RWPE1 (cell line): ENCODE measurements at regions of chrX and their contacts with region 1.

Region 1: GRCh38 chrX:74015379-74016019 is 288.5 kb upstream of the ZCCHC13 start:
- DNase-seq: peak; percentile 41
- H3K27ac ChIP-seq: no peak overlapping the region
- CTCF ChIP-seq: peak; percentile 65

Region 2: DNA sequence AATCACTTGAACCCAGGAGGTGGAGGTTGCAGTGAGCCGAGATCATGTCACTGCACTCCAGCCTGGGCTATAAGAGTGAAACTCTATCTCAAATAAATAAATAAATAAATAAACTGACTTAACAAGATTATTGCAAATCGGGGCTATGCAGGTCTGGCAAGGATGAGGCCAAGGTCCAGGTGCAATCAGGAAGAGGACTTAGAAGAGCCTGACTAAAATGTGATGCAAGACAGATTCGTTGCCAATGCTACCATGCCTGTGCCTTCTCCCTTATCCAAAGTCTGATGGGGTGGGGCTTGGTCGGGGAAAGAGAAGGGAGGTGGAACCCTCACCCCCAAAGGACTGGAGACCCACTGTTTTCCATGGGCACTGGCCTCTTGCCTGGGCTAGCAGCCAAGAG is 303.2 kb after region 1 on chrX:
- CTCF ChIA-PET with region 1: no interaction called
- POLR2A ChIA-PET with region 1: interaction called, 10 read pairs
- DNase-seq: no peak
- H3K27ac ChIP-seq: no peak overlapping the region
- CTCF ChIP-seq: no peak